ENCODE measurements at regions of chr2 and their contacts with region 1.

Region 1: GRCh38 chr2:2291500-2292260 is 39.4 kb downstream of the MYT1L start:
- DNase-seq: peak in 2 of 4 experiments; percentile 8 to 9
- ATAC-seq: peak; percentile 66; the same call in 2 of the 3 replicates
- H3K4me3 ChIP-seq: no peak overlapping the region
- H3K27ac ChIP-seq: no peak overlapping the region
- H3K4me1 ChIP-seq: no peaks in the 10 kb centered on the region; a peak in 1 of 5 replicates
- H3K27me3 ChIP-seq: peaks cover 0 to 6% of the 10 kb centered on the region in 2 experiments; a peak in 2 of 5 replicates
- CTCF ChIP-seq: peak in 2 of 3 experiments; percentile 16 to 20; a peak in 3 of 6 replicates
- EP300 ChIP-seq: no peak
- POLR2A ChIP-seq: no peak
- RAD21 ChIP-seq: peak in 1 of 2 experiments; percentile 30; a peak in 1 of 4 replicates

Region 2: GRCh38 chr2:1886405-1886992 is 405.2 kb before region 1 on chr2:
- CTCF ChIA-PET with region 1: no interaction called
- POLR2A ChIA-PET with region 1: no interaction called
- in situ Hi-C with region 1: loop called (anchors 25 kb)
- intact Hi-C with region 1: no loop called
- DNase-seq: peak; percentile 56 to 67 (median 57)
- ATAC-seq: peak; percentile 89
- H3K4me3 ChIP-seq: no peak overlapping the region
- H3K27ac ChIP-seq: no peak overlapping the region
- H3K4me1 ChIP-seq: no peaks in the 10 kb centered on the region
- H3K27me3 ChIP-seq: peaks cover 7 to 31% of the 10 kb centered on the region in 2 experiments; a peak in 3 of 5 replicates
- CTCF ChIP-seq: peak; percentile 54 to 74 (median 56)
- EP300 ChIP-seq: no peak
- POLR2A ChIP-seq: no peak
- RAD21 ChIP-seq: peak; percentile 15 to 38; a peak in 1 of 4 replicates

Measured in K562 (cell line).